ENCODE measurements at regions of chr13 and their contacts with region 1.

Region 1: DNA sequence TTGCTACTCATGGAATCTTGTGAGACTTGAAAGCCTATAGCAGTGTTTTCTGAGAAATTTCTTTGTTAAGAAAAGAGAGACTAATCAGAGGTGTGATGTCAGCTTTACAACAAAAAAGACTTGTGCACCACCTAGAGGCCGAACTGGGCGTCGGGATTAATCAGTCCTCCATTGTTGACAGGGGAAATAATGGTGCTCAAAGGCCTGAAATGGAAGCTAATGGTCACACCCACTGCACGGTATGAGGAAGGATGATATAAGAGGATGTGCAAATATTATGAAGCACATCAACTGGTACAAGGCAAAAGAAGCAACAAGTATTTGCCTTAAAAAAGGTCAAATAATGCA is 480.2 kb upstream of the MIR17HG start:
- DNase-seq: peak; percentile 77
- ATAC-seq: peak; percentile 96
- H3K4me3 Mint-ChIP-seq: no peak overlapping the region
- H3K27ac Mint-ChIP-seq: no peak overlapping the region
- H3K4me1 Mint-ChIP-seq: peaks cover 13% of the 10 kb centered on the region
- H3K27me3 Mint-ChIP-seq: no peaks in the 10 kb centered on the region
- CTCF ChIP-seq: peak; percentile 77

Region 2: GRCh38 chr13:90732049-90732448 is 135.3 kb before region 1 on chr13:
- CTCF ChIA-PET with region 1: interaction called, 34 read pairs
- POLR2A ChIA-PET with region 1: no interaction called
- DNase-seq: peak; percentile 49
- ATAC-seq: peak; percentile 68
- H3K4me3 Mint-ChIP-seq: no peak overlapping the region
- H3K27ac Mint-ChIP-seq: no peak overlapping the region
- H3K4me1 Mint-ChIP-seq: no peaks in the 10 kb centered on the region
- H3K27me3 Mint-ChIP-seq: no peaks in the 10 kb centered on the region
- CTCF ChIP-seq: no peak

Measured in WTC11 (cell line).